Activated CD4-positive, alpha-beta T cell treated with anti-CD3 and anti-CD28 coated beads, Interleukin-2, amount 10 ng/mL, durations not matched to agents 7 days and 5 days (primary cell): ENCODE measurements at regions of chr15 and their contacts with region 1.

Region 1: GRCh38 chr15:90400406-90401314 is 12.6 kb downstream of the IQGAP1 start:
- DNase-seq: peak; percentile 84
- H3K4me3 Mint-ChIP-seq: peak overlapping the region; percentile 59
- H3K27ac Mint-ChIP-seq: peak overlapping the region; percentile 91
- H3K4me1 Mint-ChIP-seq: peaks cover 62% of the 10 kb centered on the region
- H3K27me3 Mint-ChIP-seq: no peaks in the 10 kb centered on the region

Region 2: GRCh38 chr15:90412356-90413194 is 11.9 kb after region 1 on chr15:
- CTCF ChIA-PET with region 1: interaction called, 22 read pairs
- POLR2A ChIA-PET with region 1: no interaction called
- DNase-seq: peak; percentile 29
- H3K4me3 Mint-ChIP-seq: no peak overlapping the region
- H3K27ac Mint-ChIP-seq: peak overlapping the region; percentile 43
- H3K4me1 Mint-ChIP-seq: peaks cover 69% of the 10 kb centered on the region
- H3K27me3 Mint-ChIP-seq: no peaks in the 10 kb centered on the region

Region 3: DNA sequence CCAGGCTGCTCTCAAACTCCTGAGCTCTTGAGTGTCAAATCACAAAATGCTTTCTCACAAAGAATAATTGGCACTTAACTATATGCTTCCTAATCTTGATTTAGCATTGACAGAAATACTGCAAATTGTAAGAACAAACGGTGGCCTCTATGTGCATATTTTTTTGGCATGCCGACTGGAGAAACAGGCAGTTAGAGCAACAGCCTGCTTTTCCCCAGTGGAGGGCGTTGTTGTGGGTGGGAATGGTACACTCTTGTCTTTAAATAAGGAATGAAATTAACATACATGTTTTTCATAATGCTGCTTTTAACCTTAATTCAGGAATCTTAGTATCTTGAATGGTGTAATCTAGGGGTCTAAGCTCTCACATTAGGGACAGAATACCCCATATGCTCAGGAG is 668.3 kb after region 1 on chr15:
- CTCF ChIA-PET with region 1: no interaction called
- POLR2A ChIA-PET with region 1: no interaction called
- DNase-seq: no peak
- H3K4me3 Mint-ChIP-seq: no peak overlapping the region
- H3K27ac Mint-ChIP-seq: no peak overlapping the region
- H3K4me1 Mint-ChIP-seq: no peaks in the 10 kb centered on the region
- H3K27me3 Mint-ChIP-seq: peaks cover 28% of the 10 kb centered on the region